ENCODE measurements at regions of chr3 and their contacts with region 1.

Region 1: DNA sequence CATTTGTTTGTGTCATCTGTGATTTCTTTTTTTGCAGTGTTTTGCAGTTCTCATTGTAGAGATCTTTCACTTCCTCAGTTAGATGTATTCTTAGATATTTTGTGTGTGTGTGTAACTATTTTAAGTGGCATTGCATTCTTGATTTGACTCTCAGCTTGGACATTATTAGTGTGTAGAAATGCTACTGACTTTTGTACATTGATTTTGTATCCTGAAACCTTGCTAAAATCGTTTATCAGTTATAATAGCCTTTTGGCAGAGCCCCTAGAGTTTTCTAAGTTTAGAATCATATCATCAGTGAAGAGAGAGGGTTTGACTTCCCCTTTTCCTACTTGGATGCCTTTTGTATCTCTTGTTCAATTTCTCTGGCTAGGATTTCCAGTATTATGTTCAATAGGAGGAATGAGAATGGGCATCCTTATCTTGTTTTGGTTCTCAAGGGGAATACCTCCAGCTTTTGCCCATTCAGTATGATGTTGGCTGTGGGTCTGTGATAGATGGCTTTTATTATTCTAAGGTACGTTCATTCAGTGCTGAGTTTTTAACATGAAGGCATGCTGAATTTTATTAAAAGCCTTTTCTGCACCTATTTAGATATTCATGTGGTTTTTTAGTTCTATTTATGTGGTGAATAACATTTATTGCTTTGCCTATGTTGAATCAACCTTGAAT is 211.7 kb downstream of the MBNL1 start:
- DNase-seq: no peak
- ATAC-seq: no peak
- H3K4me3 ChIP-seq: no peak overlapping the region
- H3K27ac ChIP-seq: no peak overlapping the region
- H3K4me1 ChIP-seq: peaks cover 0 to 9% (median 0%) of the 10 kb centered on the region in 9 donors
- H3K27me3 ChIP-seq: no peaks in the 10 kb centered on the region
- CTCF ChIP-seq: no peak

Region 2: GRCh38 chr3:152519376-152519775 is 39.0 kb after region 1 on chr3:
- intact Hi-C with region 1: loop called in 6 of 10 experiments (anchors 5 to 10 kb)
- DNase-seq: no peak
- ATAC-seq: no peak
- H3K4me3 ChIP-seq: no peak overlapping the region
- H3K27ac ChIP-seq: no peak overlapping the region
- H3K4me1 ChIP-seq: peaks cover 0 to 2% (median 0%) of the 10 kb centered on the region in 9 donors
- H3K27me3 ChIP-seq: no peaks in the 10 kb centered on the region
- CTCF ChIP-seq: no peak

Region 3: DNA sequence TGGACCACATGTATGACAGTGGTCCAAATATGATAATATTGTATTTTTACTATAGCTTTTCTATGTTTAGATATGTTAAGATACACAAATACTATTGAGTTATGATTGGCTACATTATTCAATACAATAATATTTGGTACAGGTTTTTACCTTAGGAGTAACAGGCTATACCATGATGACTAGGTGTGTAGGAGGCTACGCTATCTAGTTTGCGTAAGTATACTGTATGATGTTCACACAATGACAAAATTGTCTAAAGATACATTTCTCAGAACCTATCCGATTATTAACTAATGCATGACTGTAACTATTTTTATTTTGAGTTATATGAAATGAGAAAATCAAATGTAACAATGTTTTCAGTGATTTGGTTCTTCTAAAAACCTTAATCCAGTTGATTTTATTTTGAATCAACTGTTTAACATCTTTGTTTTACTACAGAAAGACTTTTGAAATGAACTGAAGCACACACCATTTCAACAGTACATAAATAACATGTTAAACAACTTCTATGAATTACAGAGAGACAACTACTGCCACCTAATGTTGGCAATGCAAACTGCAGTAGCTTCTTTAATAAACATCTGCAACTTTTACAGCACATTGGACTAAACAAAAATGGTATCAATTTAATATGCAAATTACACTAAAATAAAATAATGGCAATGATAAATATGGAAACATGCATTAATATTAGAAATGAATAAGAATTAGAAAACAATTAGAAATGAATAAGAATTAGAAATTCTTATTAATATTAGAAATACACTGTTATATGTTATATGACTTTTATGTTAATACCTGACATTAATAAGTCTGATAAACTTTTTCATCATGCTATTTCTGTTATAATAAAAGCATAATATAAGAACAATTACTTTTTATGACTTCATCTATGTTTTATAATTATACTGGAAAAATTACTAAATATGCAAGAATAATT is 44.1 kb after region 1 on chr3:
- intact Hi-C with region 1: loop called in 6 of 10 experiments (anchors 5 to 10 kb)
- DNase-seq: peak in 1 of 2 donors; percentile 59
- ATAC-seq: no peak
- H3K4me3 ChIP-seq: no peak overlapping the region
- H3K27ac ChIP-seq: no peak overlapping the region
- H3K4me1 ChIP-seq: peaks cover 0 to 3% (median 0%) of the 10 kb centered on the region in 9 donors
- H3K27me3 ChIP-seq: no peaks in the 10 kb centered on the region
- CTCF ChIP-seq: peak; percentile 60 to 92 (median 86)

Region 4: GRCh38 chr3:153173758-153174516 is 693.5 kb after region 1 on chr3:
- intact Hi-C with region 1: no loop called
- DNase-seq: no peak
- ATAC-seq: no peak
- H3K4me3 ChIP-seq: no peak overlapping the region
- H3K27ac ChIP-seq: no peak overlapping the region
- H3K4me1 ChIP-seq: no peaks in the 10 kb centered on the region
- H3K27me3 ChIP-seq: no peaks in the 10 kb centered on the region
- CTCF ChIP-seq: no peak